ENCODE measurements at regions of chr14 and their contacts with region 1.

Region 1: DNA sequence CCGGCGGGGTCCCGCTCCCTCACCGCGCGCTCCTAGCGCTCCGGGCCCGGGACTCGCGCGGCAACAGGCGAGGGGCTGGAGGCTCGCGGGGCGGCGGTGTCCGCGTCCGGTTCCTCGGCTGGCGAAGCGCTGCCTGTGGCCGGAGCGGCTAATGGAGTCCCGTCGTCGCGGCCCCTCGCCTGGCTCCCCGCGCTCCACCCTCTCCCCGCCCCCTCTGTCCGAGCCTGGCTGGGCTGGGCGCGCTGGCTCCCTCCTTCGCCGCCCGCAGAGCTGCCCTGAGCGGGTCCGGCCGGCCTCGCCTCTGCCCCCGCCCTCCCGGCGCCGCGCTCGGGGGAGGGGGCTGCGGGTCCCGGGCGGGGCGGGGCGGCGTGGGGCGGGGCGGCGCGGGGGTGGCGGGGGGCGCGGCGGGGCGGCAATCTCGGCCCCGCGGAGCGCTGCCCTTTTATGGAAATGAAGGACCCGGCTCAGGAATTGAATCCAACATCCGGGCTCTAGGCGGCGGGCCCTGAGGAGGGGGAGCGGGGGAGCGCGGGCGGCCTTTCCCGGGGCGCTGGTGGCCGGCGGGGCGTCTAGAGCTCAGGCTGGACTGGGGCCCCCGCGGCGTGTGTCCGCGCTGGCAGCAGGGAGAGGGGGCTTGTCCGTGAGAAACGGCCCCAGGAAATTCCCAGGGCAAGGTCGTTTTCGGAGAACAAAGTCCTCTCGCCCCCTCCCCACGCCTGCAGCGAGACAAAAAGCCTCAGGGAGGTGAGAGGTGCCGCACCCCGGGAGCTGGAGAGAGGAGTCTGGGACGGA is at the start of gene FERMT2:
- DNase-seq: peak; percentile 92
- total RNA-seq, gene FERMT2: 156 TPM

Region 2: DNA sequence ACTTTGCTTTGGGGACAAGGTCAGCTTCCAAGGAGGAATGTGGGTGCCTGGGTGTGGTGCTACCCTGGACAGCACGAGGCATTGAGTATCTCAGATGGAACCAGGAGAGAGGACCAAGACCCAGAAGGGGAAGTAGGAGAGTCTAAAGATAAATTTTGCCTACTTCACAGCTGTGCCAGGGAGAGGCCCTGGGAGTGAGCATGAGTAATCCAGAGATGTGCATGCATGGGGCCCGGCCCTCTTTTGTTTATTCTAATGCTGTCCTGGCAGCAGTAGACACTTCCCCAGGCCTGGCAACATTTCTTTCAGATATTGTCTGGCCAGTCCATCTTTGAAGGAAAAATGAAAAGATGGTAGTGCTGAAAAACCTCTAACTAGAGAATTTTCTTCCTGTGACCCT is 110.2 kb before region 1 on chr14:
- intact Hi-C with region 1: loop called (anchors 5 kb)
- DNase-seq: no peak

Region 3: GRCh38 chr14:52876311-52876710 is 74.8 kb before region 1 on chr14:
- intact Hi-C with region 1: loop called (anchors 5 kb)
- DNase-seq: no peak

Region 4: DNA sequence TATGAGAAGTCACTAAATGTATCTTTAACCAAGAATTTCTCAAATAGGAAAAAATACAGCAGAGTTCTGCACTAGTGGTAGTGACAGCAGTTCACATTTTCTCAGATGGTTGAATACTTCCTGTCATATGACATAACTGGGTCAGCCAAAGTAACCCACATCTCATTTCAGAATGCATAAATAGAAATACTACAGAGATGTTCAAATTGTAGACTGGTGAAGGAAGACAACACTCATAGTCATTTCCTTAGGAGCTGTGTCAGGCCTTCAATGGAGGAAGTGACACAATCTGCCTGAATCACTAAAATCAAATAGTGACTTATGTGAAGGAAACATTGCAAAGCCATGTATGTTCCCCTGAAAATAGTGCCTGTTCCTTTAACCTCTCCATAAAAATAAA is 32.6 kb before region 1 on chr14:
- intact Hi-C with region 1: loop called (anchors 2 kb)
- DNase-seq: no peak

Region 5: GRCh38 chr14:53044486-53044885 is 93.4 kb after region 1 on chr14:
- intact Hi-C with region 1: loop called (anchors 5 kb)
- DNase-seq: no peak